ENCODE measurements at regions of chr18 and their contacts with region 1.

Region 1: DNA sequence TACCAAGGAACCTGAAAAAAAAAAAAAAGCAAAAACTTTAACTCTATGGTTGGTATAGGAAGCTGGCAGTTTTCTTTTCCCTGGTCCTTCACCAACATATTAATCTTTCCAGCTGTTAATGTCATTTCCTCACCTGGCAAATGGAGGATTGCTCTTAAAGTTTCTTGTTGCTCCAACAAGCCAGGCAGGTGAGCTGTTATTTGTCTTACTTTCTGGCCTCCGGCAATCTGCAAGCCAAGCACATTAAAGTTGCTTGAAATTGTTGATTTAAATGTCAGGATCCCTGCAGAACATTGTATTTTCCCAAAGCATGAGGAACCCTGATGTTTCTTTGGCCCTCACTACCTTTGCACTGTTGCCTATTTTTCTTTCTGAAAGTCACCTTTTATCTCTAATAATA is 664.9 kb downstream of the METTL4 start:
- DNase-seq: no peak
- H3K4me3 ChIP-seq: no peak overlapping the region
- H3K4me3 Mint-ChIP-seq: no peak overlapping the region
- H3K27ac ChIP-seq: no peak overlapping the region
- H3K27ac Mint-ChIP-seq: no peak overlapping the region
- H3K4me1 ChIP-seq: no peaks in the 10 kb centered on the region
- H3K4me1 Mint-ChIP-seq: no peaks in the 10 kb centered on the region
- H3K27me3 ChIP-seq: no peaks in the 10 kb centered on the region
- H3K27me3 Mint-ChIP-seq: peaks cover 0 to 2% (median 2%) of the 10 kb centered on the region in 3 donors
- CTCF ChIP-seq: no peak

Region 2: DNA sequence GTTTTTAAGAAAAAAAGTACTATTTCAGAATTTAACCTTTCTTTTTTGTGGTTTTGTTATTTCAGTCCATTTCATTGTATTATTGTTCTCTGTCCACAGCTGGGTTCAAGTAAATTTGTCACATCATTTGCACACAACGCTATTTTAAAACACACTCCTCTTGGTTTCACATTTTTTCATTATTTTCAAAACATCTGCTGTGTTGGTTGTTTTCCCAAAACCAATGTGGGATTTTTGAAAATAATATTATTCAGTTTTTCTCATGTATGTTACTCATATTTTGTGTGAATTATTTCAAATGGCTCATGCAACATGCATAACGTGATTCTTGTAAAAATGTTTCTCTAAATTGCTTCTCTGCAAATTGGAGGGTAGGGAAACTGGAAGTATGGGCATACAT is 75.6 kb after region 1 on chr18:
- intact Hi-C with region 1: loop called in 1 of 2 experiments (anchors 1 kb)
- DNase-seq: no peak
- H3K4me3 ChIP-seq: no peak overlapping the region
- H3K4me3 Mint-ChIP-seq: no peak overlapping the region
- H3K27ac ChIP-seq: no peak overlapping the region
- H3K27ac Mint-ChIP-seq: no peak overlapping the region
- H3K4me1 ChIP-seq: no peaks in the 10 kb centered on the region
- H3K4me1 Mint-ChIP-seq: no peaks in the 10 kb centered on the region
- H3K27me3 ChIP-seq: no peaks in the 10 kb centered on the region
- H3K27me3 Mint-ChIP-seq: no peaks in the 10 kb centered on the region
- CTCF ChIP-seq: no peak